CD8-positive, alpha-beta T cell (primary cell): ENCODE measurements at regions of chr2 and their contacts with region 1.

Region 1: GRCh38 chr2:13006829-13007717 is 290.3 kb downstream of the TRIB2 start:
- DNase-seq: peak; percentile 27 to 77 (median 64)
- ATAC-seq: peak; percentile 56
- H3K4me3 ChIP-seq: no peak overlapping the region
- H3K4me3 Mint-ChIP-seq: no peak overlapping the region
- H3K27ac ChIP-seq: no peak overlapping the region
- H3K27ac Mint-ChIP-seq: no peak overlapping the region
- H3K4me1 ChIP-seq: no peaks in the 10 kb centered on the region
- H3K4me1 Mint-ChIP-seq: peaks cover 2% of the 10 kb centered on the region
- H3K27me3 ChIP-seq: no peaks in the 10 kb centered on the region
- H3K27me3 Mint-ChIP-seq: peaks cover 19% of the 10 kb centered on the region
- CTCF ChIP-seq: peak; percentile 95

Region 2: GRCh38 chr2:11477994-11478393 is 1529.1 kb before region 1 on chr2:
- CTCF ChIA-PET with region 1: no interaction called
- POLR2A ChIA-PET with region 1: no interaction called
- intact Hi-C with region 1: loop called in 1 of 2 experiments (anchors 2 kb)
- DNase-seq: peak; percentile 56 to 87 (median 80)
- ATAC-seq: peak; percentile 59
- H3K4me3 ChIP-seq: no peak overlapping the region
- H3K4me3 Mint-ChIP-seq: no peak overlapping the region
- H3K27ac ChIP-seq: no peak overlapping the region
- H3K27ac Mint-ChIP-seq: no peak overlapping the region
- H3K4me1 ChIP-seq: no peaks in the 10 kb centered on the region
- H3K4me1 Mint-ChIP-seq: peaks cover 2% of the 10 kb centered on the region
- H3K27me3 ChIP-seq: peaks cover 5 to 14% of the 10 kb centered on the region in 2 experiments
- H3K27me3 Mint-ChIP-seq: peaks cover 24% of the 10 kb centered on the region
- CTCF ChIP-seq: peak; percentile 89

Region 3: DNA sequence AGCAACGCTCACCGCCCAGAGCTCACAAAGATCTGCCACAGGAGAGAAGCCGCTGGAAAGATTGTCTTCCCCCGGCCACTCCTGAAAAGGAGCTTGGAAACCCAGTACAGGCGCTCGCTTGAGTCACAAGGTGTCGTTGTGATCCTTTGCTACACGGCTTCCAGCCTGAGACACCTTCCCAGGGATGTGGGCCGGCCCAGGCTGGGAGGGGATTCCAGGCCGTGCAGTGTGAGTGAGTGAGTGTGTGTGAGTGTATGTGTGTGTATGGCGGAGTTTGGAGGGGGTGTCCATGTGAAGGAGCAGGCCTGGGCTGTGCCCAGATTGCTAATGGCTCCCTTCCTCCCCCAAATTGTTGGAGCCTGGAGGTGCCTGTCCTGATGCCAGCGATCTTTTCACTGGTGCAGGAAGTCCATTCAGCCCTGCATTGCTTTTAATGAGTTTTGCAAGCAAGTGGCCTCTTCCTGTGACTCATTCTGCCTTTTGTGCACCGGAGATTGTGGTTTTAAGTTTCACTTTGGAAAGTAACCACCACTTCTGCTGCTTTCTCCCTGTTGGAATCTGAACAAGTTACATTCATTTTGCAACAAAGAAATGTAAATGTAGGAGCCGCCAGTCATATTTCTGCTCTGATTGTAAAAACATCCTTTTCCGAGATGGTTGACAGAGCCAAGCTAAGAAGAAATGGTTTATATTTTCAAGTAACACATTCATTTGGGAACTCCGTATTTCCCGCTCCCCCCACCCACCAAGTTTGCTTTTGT is 1176.9 kb before region 1 on chr2:
- CTCF ChIA-PET with region 1: interaction called, 42 read pairs
- POLR2A ChIA-PET with region 1: no interaction called
- intact Hi-C with region 1: loop called (anchors 1 kb)
- DNase-seq: peak in 8 of 9 experiments; percentile 21 to 77 (median 51)
- ATAC-seq: peak; percentile 78
- H3K4me3 ChIP-seq: peak overlapping the region; percentile 27 to 40
- H3K4me3 Mint-ChIP-seq: peak overlapping the region; percentile 78
- H3K27ac ChIP-seq: no peak overlapping the region
- H3K27ac Mint-ChIP-seq: peak overlapping the region; percentile 42
- H3K4me1 ChIP-seq: peaks cover 28% of the 10 kb centered on the region
- H3K4me1 Mint-ChIP-seq: peaks cover 45% of the 10 kb centered on the region
- H3K27me3 ChIP-seq: no peaks in the 10 kb centered on the region
- H3K27me3 Mint-ChIP-seq: no peaks in the 10 kb centered on the region
- CTCF ChIP-seq: no peak

Region 4: GRCh38 chr2:12014088-12014960 is 992.7 kb before region 1 on chr2:
- CTCF ChIA-PET with region 1: no interaction called
- POLR2A ChIA-PET with region 1: no interaction called
- intact Hi-C with region 1: no loop called
- DNase-seq: no peak
- ATAC-seq: no peak
- H3K4me3 ChIP-seq: no peak overlapping the region
- H3K4me3 Mint-ChIP-seq: no peak overlapping the region
- H3K27ac ChIP-seq: no peak overlapping the region
- H3K27ac Mint-ChIP-seq: no peak overlapping the region
- H3K4me1 ChIP-seq: no peaks in the 10 kb centered on the region
- H3K4me1 Mint-ChIP-seq: peaks cover 16% of the 10 kb centered on the region
- H3K27me3 ChIP-seq: peaks cover 0 to 19% of the 10 kb centered on the region in 2 experiments
- H3K27me3 Mint-ChIP-seq: peaks cover 15% of the 10 kb centered on the region
- CTCF ChIP-seq: no peak

Region 5: DNA sequence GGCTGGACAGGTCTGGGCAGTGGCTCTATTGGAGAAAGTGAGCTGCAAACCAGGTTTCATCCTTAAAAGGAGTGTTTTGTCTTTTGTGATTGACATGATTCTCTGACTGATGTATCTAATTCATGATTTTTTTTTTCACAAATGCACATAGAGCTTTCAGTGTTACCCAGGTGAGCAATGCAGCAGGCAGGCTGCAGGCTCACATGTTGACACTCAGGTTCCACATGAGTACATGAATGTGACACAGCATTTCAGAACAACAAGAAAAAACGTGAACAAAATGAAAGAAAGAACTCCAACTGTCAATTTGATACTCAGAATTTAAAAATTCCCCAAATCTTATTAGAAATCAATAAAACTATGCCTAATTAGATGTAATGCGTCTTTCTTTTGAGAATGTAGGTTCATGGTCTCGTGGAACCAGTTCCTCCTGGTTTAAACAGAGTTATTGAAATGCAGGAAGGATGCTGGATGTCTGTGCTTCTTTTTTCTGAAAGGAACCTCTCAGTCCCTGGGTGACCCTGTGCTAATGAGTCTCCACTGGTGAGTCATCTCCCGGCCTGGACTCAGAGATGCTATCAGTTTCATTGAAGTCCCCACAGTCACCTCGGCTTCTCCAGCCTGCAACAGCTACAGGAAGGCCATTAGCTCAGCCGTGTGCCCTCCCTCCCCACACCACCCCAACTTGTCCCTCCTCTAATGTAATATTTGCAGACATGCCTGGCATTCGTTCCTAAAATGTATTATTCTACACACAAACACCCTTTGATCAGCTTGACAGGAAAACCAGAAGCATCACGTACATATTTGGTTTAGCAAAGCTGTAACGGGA is 830.2 kb before region 1 on chr2:
- CTCF ChIA-PET with region 1: no interaction called
- POLR2A ChIA-PET with region 1: no interaction called
- intact Hi-C with region 1: loop called in 1 of 2 experiments (anchors 10 kb)
- DNase-seq: peak in 2 of 9 experiments; percentile 27 to 31
- ATAC-seq: peak; percentile 30
- H3K4me3 ChIP-seq: no peak overlapping the region
- H3K4me3 Mint-ChIP-seq: peak overlapping the region; percentile 66
- H3K27ac ChIP-seq: no peak overlapping the region
- H3K27ac Mint-ChIP-seq: peak overlapping the region; percentile 69
- H3K4me1 ChIP-seq: peaks cover 27% of the 10 kb centered on the region
- H3K4me1 Mint-ChIP-seq: peaks cover 50% of the 10 kb centered on the region
- H3K27me3 ChIP-seq: no peaks in the 10 kb centered on the region
- H3K27me3 Mint-ChIP-seq: no peaks in the 10 kb centered on the region
- CTCF ChIP-seq: no peak

Region 6: DNA sequence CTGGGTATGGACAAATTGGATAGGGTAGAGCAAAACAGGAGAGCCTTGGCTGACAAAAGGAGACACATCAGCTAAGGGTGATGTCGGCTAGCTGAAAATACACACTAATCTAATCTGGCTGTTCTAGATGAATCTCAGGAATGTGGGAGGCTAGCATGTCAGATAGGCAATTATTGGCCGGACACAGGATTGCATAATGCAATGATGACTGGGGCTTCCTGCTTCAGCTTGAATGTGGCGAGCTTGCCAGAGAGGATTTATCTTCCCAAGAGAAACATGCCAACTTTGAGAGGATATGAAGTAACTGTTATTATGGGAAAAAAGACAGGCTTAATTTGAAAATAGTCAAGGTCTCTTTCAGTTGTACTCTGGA is 188.0 kb before region 1 on chr2:
- CTCF ChIA-PET with region 1: interaction called, 4 read pairs
- POLR2A ChIA-PET with region 1: no interaction called
- intact Hi-C with region 1: loop called in 1 of 2 experiments (anchors 1 kb)
- DNase-seq: no peak
- ATAC-seq: no peak
- H3K4me3 ChIP-seq: no peak overlapping the region
- H3K4me3 Mint-ChIP-seq: no peak overlapping the region
- H3K27ac ChIP-seq: no peak overlapping the region
- H3K27ac Mint-ChIP-seq: no peak overlapping the region
- H3K4me1 ChIP-seq: peaks cover 22% of the 10 kb centered on the region
- H3K4me1 Mint-ChIP-seq: peaks cover 34% of the 10 kb centered on the region
- H3K27me3 ChIP-seq: no peaks in the 10 kb centered on the region
- H3K27me3 Mint-ChIP-seq: peaks cover 6% of the 10 kb centered on the region
- CTCF ChIP-seq: no peak

Region 7: GRCh38 chr2:12990523-12990922 is 16.6 kb before region 1 on chr2:
- CTCF ChIA-PET with region 1: interaction called, 20 read pairs
- POLR2A ChIA-PET with region 1: no interaction called
- intact Hi-C with region 1: no loop called
- DNase-seq: peak in 1 of 9 experiments; percentile 6
- ATAC-seq: no peak
- H3K4me3 ChIP-seq: no peak overlapping the region
- H3K4me3 Mint-ChIP-seq: no peak overlapping the region
- H3K27ac ChIP-seq: no peak overlapping the region
- H3K27ac Mint-ChIP-seq: no peak overlapping the region
- H3K4me1 ChIP-seq: peaks cover 5% of the 10 kb centered on the region
- H3K4me1 Mint-ChIP-seq: peaks cover 9% of the 10 kb centered on the region
- H3K27me3 ChIP-seq: no peaks in the 10 kb centered on the region
- H3K27me3 Mint-ChIP-seq: no peaks in the 10 kb centered on the region
- CTCF ChIP-seq: peak; percentile 18